Aorta (tissue), 5 donors: ENCODE measurements at regions of chr7 and their contacts with region 1.

Region 1: DNA sequence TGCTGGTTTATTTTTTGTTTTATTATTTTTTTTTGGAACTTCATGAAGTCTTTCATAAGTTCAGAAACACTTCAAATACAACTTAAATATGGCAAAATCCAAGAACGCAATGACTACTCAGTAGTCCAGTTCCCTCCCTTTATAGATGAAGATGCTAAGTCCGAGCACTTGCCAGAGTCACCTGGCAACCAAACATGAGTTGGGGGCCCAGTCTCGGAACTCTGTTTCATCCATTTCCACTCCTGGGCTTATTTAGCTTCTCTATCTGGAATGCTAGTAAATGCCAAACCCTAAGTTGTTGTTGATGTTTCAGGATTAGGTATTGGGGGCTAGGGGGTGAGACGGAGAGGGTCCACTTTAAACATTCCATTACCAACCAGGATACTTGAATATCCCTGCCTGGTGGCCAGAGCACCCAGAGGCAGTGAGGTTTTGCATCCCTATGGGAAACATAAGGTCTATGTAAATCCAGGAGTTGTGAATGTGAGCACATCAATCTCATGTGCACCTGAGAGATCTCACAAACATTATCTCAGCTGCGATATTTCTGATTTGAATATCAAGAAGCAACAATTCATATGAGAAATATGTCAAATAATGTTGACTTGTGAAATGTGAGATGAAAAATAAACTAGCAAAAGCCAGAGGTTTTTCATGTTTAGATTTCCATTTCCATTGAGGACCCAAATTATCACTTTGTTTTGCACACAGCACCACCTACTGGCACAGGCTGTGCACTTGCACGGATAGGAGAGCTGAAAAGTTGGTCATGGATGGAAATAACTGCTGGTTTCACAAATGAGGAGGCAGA is 129.3 kb downstream of the PKD1L1 start:
- DNase-seq: peak; percentile 78 to 90
- ATAC-seq: peak; percentile 87
- H3K4me3 ChIP-seq: no peak overlapping the region
- H3K27ac ChIP-seq: no peak overlapping the region
- H3K4me1 ChIP-seq: peaks cover 0 to 2% of the 10 kb centered on the region in 2 donors
- H3K27me3 ChIP-seq: no peaks in the 10 kb centered on the region

Region 2: DNA sequence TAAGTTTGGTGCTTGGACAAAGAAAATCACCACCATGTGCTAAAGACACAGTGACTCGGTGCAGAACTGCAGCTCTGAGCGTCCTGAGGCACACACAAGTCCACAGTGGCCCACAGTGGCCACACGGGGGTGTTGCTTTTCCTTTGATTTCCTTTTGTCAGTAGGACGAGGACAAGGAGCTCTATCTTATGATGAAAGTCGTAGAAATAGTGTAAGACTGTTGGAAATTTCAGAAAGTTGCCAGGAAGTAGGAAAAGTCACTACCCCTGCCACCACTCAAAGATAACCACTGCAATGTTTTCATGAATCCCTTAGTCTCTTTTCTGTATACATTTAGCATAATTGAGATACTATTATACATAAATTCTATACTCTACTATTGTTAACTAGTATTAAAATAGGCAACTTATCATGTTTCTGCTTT is 383.1 kb before region 1 on chr7:
- intact Hi-C with region 1: loop called (anchors 5 kb)
- DNase-seq: peak; percentile 77 to 86
- ATAC-seq: peak; percentile 74
- H3K4me3 ChIP-seq: no peak overlapping the region
- H3K27ac ChIP-seq: no peak overlapping the region
- H3K4me1 ChIP-seq: no peaks in the 10 kb centered on the region
- H3K27me3 ChIP-seq: no peaks in the 10 kb centered on the region